ENCODE measurements at regions of chr9 and their contacts with region 1.

Region 1: DNA sequence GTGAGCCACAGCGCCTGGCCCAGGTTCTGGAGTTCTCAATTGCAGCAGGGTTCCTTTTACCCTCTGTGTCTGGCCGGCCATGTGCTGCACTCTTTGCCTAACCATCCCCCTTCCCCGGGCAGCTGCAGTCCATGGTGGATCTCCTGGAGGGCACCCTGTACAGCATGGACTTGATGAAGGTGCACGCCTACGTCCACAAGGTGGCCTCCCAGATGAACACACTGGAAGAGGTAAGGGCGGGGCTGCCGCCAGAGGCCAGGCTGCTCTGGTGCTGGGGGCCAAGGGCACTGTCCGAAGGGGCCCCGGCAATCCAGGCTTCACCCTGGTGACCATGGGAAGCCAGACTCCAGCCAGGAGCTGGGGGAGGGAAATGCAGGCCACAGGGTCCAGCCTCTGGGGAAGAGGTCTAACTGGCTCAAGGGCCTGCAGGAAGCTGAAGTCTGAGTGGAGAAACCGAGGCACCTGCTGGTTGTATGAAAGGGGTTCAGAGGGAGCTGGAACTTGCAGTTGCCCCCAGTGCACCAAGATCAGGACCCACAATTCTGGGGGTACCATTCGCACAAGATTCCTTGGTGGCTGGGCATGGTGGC is 18.1 kb downstream of the OLFML2A start:
- DNase-seq: peak; percentile 88
- ATAC-seq: peak; percentile 97
- H3K4me3 ChIP-seq: no peak overlapping the region
- H3K27ac ChIP-seq: no peak overlapping the region
- H3K4me1 ChIP-seq: peaks cover 33% of the 10 kb centered on the region
- H3K27me3 ChIP-seq: peaks cover 1 to 23% of the 10 kb centered on the region in 2 experiments; a peak in 2 of 5 replicates
- CTCF ChIP-seq: peak; percentile 97
- EP300 ChIP-seq: no peak
- POLR2A ChIP-seq: no peak
- RAD21 ChIP-seq: peak; percentile 77

Region 2: DNA sequence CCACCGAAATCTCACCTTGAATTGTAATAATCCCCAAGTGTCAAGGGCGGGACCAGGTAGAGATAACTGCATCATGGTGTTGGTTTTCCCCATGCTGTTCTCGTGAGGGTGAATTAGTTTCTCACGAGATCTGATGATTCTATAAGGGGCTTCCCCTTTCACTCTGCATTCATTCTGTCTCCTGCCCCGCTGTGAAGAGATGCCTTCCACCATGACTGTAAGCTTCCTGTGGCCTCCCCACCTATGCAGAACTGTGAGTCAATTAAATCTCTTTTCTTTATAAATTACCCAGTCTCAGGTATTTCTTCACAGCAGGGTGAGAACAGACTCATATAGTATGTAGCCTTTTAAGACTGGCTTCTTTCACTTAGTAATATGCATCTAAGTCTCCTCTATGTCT is 159.7 kb before region 1 on chr9:
- CTCF ChIA-PET with region 1: no interaction called
- POLR2A ChIA-PET with region 1: no interaction called
- in situ Hi-C with region 1: no loop called
- intact Hi-C with region 1: no loop called
- DNase-seq: no peak
- ATAC-seq: no peak
- H3K4me3 ChIP-seq: no peak overlapping the region
- H3K27ac ChIP-seq: no peak overlapping the region
- H3K4me1 ChIP-seq: no peaks in the 10 kb centered on the region
- H3K27me3 ChIP-seq: no peaks in the 10 kb centered on the region
- CTCF ChIP-seq: no peak
- EP300 ChIP-seq: no peak
- POLR2A ChIP-seq: no peak
- RAD21 ChIP-seq: no peak

Region 3: DNA sequence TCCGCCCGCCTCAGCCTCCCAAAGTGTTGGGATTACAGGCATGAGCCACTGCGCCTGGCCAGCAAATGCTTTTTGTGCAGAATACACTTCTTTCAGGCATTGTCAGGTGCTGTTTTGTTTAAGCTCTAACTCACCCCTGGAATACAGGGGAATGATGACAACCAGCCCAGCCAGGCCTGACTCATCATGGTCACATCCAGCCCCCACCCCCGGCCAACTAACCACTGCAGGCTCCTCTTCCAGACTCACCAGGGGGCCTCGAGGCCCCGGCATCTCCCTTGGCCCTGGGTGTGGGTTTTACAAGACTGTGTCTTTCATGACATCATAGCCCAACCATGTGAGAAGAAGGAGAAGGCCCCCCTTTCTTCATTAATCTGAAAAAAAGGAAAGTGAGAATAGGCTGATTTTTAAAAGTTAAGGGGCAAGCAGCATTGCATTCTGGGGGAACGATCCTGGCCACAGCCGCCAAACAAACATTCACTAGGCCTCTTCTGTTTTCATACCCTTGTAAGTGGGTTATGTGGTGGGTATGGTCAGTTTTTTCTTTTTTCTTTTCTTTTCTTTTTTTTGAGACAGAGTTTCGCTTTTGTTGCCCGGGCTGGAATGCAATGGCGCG is 17.5 kb after region 1 on chr9:
- CTCF ChIA-PET with region 1: no interaction called
- POLR2A ChIA-PET with region 1: interaction called, 5 read pairs
- in situ Hi-C with region 1: no loop called
- intact Hi-C with region 1: loop called (anchors 2 kb)
- DNase-seq: peak; percentile 56
- ATAC-seq: no peak
- H3K4me3 ChIP-seq: no peak overlapping the region
- H3K27ac ChIP-seq: no peak overlapping the region
- H3K4me1 ChIP-seq: peaks cover 49% of the 10 kb centered on the region
- H3K27me3 ChIP-seq: no peaks in the 10 kb centered on the region
- CTCF ChIP-seq: no peak
- EP300 ChIP-seq: no peak
- POLR2A ChIP-seq: no peak
- RAD21 ChIP-seq: no peak

Region 4: DNA sequence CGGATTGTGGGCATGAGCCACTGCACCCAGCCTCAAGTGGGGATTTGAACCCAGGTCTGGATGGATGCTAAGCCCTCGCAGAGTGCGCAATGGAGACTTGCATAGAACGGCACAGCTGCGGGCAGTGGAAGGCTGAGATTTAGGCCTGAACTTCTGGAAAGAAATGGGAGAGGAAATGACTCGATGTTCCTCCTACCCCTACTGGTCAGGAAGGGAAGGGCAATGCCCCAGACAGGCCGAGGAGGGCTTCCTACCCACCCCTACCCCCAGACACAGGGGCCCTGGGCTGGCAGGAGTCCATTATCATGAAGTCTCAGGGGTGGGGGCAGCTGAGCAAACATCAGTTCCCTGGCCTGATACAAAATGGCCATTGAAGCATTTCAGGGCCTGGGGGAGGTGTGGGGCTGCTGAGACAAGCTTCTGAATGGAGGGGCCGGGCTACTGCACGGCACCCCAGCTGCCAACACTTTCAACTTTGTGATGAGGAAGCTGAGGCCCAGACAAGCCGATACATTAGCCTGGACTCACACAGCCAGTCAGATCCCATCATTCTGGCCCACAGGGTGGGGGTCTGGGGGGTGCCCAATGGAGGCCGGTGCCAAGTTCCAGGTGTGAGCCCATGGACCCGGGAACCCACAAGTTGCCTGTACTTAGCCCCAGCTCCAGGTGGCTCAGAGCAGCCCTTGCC is 44.8 kb after region 1 on chr9:
- CTCF ChIA-PET with region 1: interaction called, 6 read pairs
- POLR2A ChIA-PET with region 1: no interaction called
- in situ Hi-C with region 1: loop called (anchors 10 kb)
- intact Hi-C with region 1: no loop called
- DNase-seq: peak; percentile 43
- ATAC-seq: peak; percentile 73
- H3K4me3 ChIP-seq: peak overlapping the region in 1 of 3 experiments; percentile 60; a peak in 1 of 6 replicates
- H3K27ac ChIP-seq: no peak overlapping the region
- H3K4me1 ChIP-seq: peaks cover 34% of the 10 kb centered on the region
- H3K27me3 ChIP-seq: peaks cover 0 to 6% of the 10 kb centered on the region in 2 experiments; a peak in 2 of 5 replicates
- CTCF ChIP-seq: peak; percentile 58
- EP300 ChIP-seq: no peak
- POLR2A ChIP-seq: no peak
- RAD21 ChIP-seq: no peak

Region 5: GRCh38 chr9:124852829-124853531 is 58.0 kb after region 1 on chr9 and contains the start of gene WDR38:
- CTCF ChIA-PET with region 1: interaction called, 36 read pairs
- POLR2A ChIA-PET with region 1: interaction called, 13 read pairs
- in situ Hi-C with region 1: loop called (anchors 10 kb)
- intact Hi-C with region 1: loop called (anchors 2 kb)
- DNase-seq: peak; percentile 77
- ATAC-seq: peak; percentile 79
- H3K4me3 ChIP-seq: peak within 1 kb of the TSS; percentile 24 to 69 (median 54); a peak in 5 of 6 replicates
- H3K27ac ChIP-seq: no peak within 1 kb of the TSS
- H3K4me1 ChIP-seq: peaks cover 38% of the 10 kb centered on the region
- H3K27me3 ChIP-seq: no peaks in the 10 kb centered on the region; a peak in 2 of 5 replicates
- CTCF ChIP-seq: peak; percentile 96
- EP300 ChIP-seq: no peak
- POLR2A ChIP-seq: no peak
- RAD21 ChIP-seq: peak; percentile 99
- total RNA-seq, gene WDR38: not detected in 2 replicates

Measured in HepG2 (cell line).